ENCODE measurements at regions of chr1 and their contacts with region 1.

Region 1: DNA sequence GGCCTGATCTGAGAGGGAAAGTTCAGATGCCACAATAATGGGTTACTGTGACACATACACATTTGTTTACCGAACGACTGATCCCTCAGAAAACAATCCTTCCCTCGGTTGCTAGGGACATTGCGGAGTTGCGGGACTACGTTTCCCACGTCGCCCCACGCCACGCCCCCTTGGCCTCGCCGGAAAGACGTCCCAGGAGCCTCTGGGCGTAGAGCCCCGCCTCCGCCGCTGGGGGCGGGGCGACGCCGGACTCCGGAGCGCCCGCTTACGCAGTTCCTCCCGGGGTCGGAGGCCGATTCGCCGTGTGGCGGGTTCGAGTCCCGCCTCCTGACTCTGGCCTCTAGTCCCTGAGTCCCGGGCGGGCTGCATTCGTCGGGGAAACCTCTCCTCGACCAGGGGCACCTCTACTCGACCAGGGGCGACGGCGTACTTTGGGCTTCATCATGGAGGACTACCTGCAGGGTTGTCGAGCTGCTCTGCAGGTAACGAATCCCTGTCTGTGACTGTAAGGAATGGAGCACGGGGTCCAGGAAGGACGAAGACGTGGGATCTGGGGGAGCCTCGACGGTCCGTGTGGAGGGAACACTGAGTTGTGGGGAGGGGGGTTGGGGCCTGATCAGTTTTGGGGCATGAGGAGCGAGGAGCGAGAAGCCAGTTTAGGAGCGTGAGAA is at the start of gene PRUNE1:
- DNase-seq: peak; percentile 92 to 100 (median 97)
- ATAC-seq: peak; percentile 92
- H3K4me3 ChIP-seq: peak within 1 kb of the TSS; percentile 78 to 83
- H3K4me3 Mint-ChIP-seq: peak within 1 kb of the TSS; percentile 96
- H3K27ac ChIP-seq: peak within 1 kb of the TSS; percentile 76 to 95
- H3K27ac Mint-ChIP-seq: peak within 1 kb of the TSS; percentile 97
- H3K4me1 ChIP-seq: peaks cover 59% of the 10 kb centered on the region
- H3K4me1 Mint-ChIP-seq: peaks cover 83% of the 10 kb centered on the region
- H3K27me3 ChIP-seq: no peaks in the 10 kb centered on the region
- H3K27me3 Mint-ChIP-seq: no peaks in the 10 kb centered on the region
- CTCF ChIP-seq: no peak
- total RNA-seq, gene PRUNE1: 8.0 to 9.0 TPM

Region 2: GRCh38 chr1:150696590-150697524 is 311.5 kb before region 1 on chr1 and contains the start of gene GOLPH3L:
- CTCF ChIA-PET with region 1: no interaction called
- POLR2A ChIA-PET with region 1: no interaction called
- intact Hi-C with region 1: loop called (anchors 1 to 10 kb)
- DNase-seq: peak; percentile 76 to 97 (median 88)
- ATAC-seq: peak; percentile 98
- H3K4me3 ChIP-seq: peak within 1 kb of the TSS; percentile 81 to 88
- H3K4me3 Mint-ChIP-seq: peak within 1 kb of the TSS; percentile 98
- H3K27ac ChIP-seq: peak within 1 kb of the TSS; percentile 70 to 81
- H3K27ac Mint-ChIP-seq: peak within 1 kb of the TSS; percentile 92
- H3K4me1 ChIP-seq: peaks cover 7% of the 10 kb centered on the region
- H3K4me1 Mint-ChIP-seq: peaks cover 38% of the 10 kb centered on the region
- H3K27me3 ChIP-seq: no peaks in the 10 kb centered on the region
- H3K27me3 Mint-ChIP-seq: peaks cover 2% of the 10 kb centered on the region
- CTCF ChIP-seq: no peak
- total RNA-seq, gene GOLPH3L: 1.6 to 1.8 TPM

Region 3: GRCh38 chr1:150925816-150926741 is 82.2 kb before region 1 on chr1 and contains the start of gene SETDB1:
- CTCF ChIA-PET with region 1: interaction called, 5 read pairs
- POLR2A ChIA-PET with region 1: no interaction called
- intact Hi-C with region 1: loop called in 1 of 2 experiments (anchors 5 kb)
- DNase-seq: peak; percentile 84 to 98 (median 91)
- ATAC-seq: peak; percentile 96
- H3K4me3 ChIP-seq: peak within 1 kb of the TSS; percentile 91 to 93
- H3K4me3 Mint-ChIP-seq: peak within 1 kb of the TSS; percentile 94
- H3K27ac ChIP-seq: peak within 1 kb of the TSS; percentile 79 to 93
- H3K27ac Mint-ChIP-seq: peak within 1 kb of the TSS; percentile 93
- H3K4me1 ChIP-seq: peaks cover 17% of the 10 kb centered on the region
- H3K4me1 Mint-ChIP-seq: peaks cover 31% of the 10 kb centered on the region
- H3K27me3 ChIP-seq: no peaks in the 10 kb centered on the region
- H3K27me3 Mint-ChIP-seq: no peaks in the 10 kb centered on the region
- CTCF ChIP-seq: no peak
- total RNA-seq, gene SETDB1: 44.1 to 47.4 TPM

Region 4: DNA sequence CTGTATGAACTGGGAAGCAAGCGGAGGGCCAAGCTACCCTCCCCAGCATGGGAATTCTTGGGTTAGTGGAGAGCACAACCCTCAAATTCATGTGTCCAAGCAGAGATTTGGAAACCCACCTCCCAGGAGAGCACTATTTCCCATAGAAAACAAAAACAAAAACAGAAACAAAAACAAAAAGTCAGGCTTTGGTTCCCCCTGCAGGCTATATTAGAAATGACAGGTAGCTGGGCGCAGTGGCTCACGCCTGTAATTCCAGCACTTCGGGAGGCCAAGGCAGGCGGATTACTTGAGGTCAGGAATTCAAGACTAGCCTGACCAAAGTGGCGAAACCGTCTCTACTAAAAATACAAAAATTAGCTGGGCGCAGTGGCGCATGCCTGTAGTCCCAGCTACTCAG is 12.4 kb before region 1 on chr1:
- CTCF ChIA-PET with region 1: interaction called, 283 read pairs
- POLR2A ChIA-PET with region 1: interaction called, 4 read pairs
- intact Hi-C with region 1: loop called in 1 of 2 experiments (anchors 1 kb)
- DNase-seq: peak in 4 of 9 experiments; percentile 29 to 65 (median 44)
- ATAC-seq: peak; percentile 64
- H3K4me3 ChIP-seq: no peak overlapping the region
- H3K4me3 Mint-ChIP-seq: no peak overlapping the region
- H3K27ac ChIP-seq: no peak overlapping the region
- H3K27ac Mint-ChIP-seq: no peak overlapping the region
- H3K4me1 ChIP-seq: no peaks in the 10 kb centered on the region
- H3K4me1 Mint-ChIP-seq: peaks cover 8% of the 10 kb centered on the region
- H3K27me3 ChIP-seq: no peaks in the 10 kb centered on the region
- H3K27me3 Mint-ChIP-seq: no peaks in the 10 kb centered on the region
- CTCF ChIP-seq: peak; percentile 95

Region 5: GRCh38 chr1:151059078-151059907 is 51.0 kb after region 1 on chr1 and contains the start of gene CDC42SE1:
- CTCF ChIA-PET with region 1: interaction called, 3 read pairs
- POLR2A ChIA-PET with region 1: interaction called, 5 read pairs
- intact Hi-C with region 1: loop called (anchors 1 to 5 kb)
- DNase-seq: peak; percentile 72 to 95 (median 86)
- ATAC-seq: peak; percentile 75
- H3K4me3 ChIP-seq: peak within 1 kb of the TSS; percentile 90 to 93
- H3K4me3 Mint-ChIP-seq: peak within 1 kb of the TSS; percentile 99
- H3K27ac ChIP-seq: peak within 1 kb of the TSS; percentile 88 to 95
- H3K27ac Mint-ChIP-seq: peak within 1 kb of the TSS; percentile 98
- H3K4me1 ChIP-seq: peaks cover 29% of the 10 kb centered on the region
- H3K4me1 Mint-ChIP-seq: peaks cover 56% of the 10 kb centered on the region
- H3K27me3 ChIP-seq: no peaks in the 10 kb centered on the region
- H3K27me3 Mint-ChIP-seq: no peaks in the 10 kb centered on the region
- CTCF ChIP-seq: peak; percentile 81
- total RNA-seq, gene CDC42SE1: 275 to 282 TPM

Region 6: GRCh38 chr1:151146412-151147140 is 138.3 kb after region 1 on chr1 and contains the start of gene SEMA6C:
- CTCF ChIA-PET with region 1: no interaction called
- POLR2A ChIA-PET with region 1: no interaction called
- intact Hi-C with region 1: loop called in 1 of 2 experiments (anchors 1 kb)
- DNase-seq: peak; percentile 62 to 92 (median 85)
- ATAC-seq: peak; percentile 99
- H3K4me3 ChIP-seq: peak within 1 kb of the TSS; percentile 81 to 84
- H3K4me3 Mint-ChIP-seq: peak within 1 kb of the TSS; percentile 98
- H3K27ac ChIP-seq: peak within 1 kb of the TSS; percentile 19 to 28
- H3K27ac Mint-ChIP-seq: peak within 1 kb of the TSS; percentile 82
- H3K4me1 ChIP-seq: peaks cover 5% of the 10 kb centered on the region
- H3K4me1 Mint-ChIP-seq: peaks cover 17% of the 10 kb centered on the region
- H3K27me3 ChIP-seq: peaks cover 0 to 2% of the 10 kb centered on the region in 2 experiments
- H3K27me3 Mint-ChIP-seq: no peaks in the 10 kb centered on the region
- CTCF ChIP-seq: no peak
- total RNA-seq, gene SEMA6C: 2.0 to 3.0 TPM

Region 7: GRCh38 chr1:151281969-151282882 is 273.9 kb after region 1 on chr1 and contains the start of gene ZNF687:
- CTCF ChIA-PET with region 1: no interaction called
- POLR2A ChIA-PET with region 1: no interaction called
- intact Hi-C with region 1: loop called in 1 of 2 experiments (anchors 2 kb)
- DNase-seq: peak; percentile 95 to 100 (median 98)
- ATAC-seq: peak; percentile 84
- H3K4me3 ChIP-seq: peak within 1 kb of the TSS; percentile 72 to 89
- H3K4me3 Mint-ChIP-seq: peak within 1 kb of the TSS; percentile 99
- H3K27ac ChIP-seq: peak within 1 kb of the TSS; percentile 91 to 94
- H3K27ac Mint-ChIP-seq: peak within 1 kb of the TSS; percentile 98
- H3K4me1 ChIP-seq: peaks cover 21% of the 10 kb centered on the region
- H3K4me1 Mint-ChIP-seq: peaks cover 28% of the 10 kb centered on the region
- H3K27me3 ChIP-seq: no peaks in the 10 kb centered on the region
- H3K27me3 Mint-ChIP-seq: no peaks in the 10 kb centered on the region
- CTCF ChIP-seq: no peak
- total RNA-seq, gene ZNF687: 34.0 to 36.3 TPM

Measured in CD8-positive, alpha-beta T cell (primary cell).